Posterior vena cava (tissue), 2 donors: ENCODE measurements at regions of chr16 and their contacts with region 1.

Region 1: DNA sequence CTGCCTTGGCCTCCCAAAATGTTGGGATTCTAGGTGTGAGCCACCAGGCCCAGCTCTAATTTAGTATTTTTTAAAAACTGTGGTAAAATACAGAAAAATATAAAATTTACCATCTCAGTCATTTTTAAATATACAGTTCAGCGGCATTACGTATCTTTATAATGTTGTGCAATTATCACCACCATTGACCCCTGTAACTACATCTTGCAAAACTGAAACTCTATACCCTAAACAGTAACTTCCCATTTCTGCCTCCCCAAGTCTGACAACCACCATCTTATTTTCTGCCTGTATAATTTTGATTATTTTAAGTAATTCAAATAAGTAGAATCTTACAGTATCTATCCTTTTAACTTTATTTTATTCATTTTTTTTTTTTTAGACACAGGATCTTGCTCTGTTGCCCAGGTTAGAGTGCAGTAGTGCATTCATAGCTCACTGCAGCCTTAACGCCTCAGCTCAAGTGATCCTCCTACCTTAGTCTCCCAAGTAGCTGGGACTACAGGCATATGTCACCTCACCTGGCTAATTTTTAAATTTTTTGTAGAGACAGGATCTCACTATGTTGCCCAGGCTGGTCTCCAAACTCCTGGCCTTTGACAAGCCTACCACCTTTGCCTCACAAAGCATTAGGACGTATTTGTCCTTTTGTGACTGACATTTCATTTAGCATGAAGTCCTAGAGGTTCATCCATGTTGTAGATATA is 10.9 kb upstream of the GGA2 start:
- DNase-seq: no peak

Region 2: GRCh38 chr16:24694931-24695330 is 1173.7 kb after region 1 on chr16:
- intact Hi-C with region 1: loop called in 1 of 2 experiments (anchors 5 kb)
- DNase-seq: no peak